ENCODE measurements at regions of chr4 and their contacts with region 1.

Region 1: GRCh38 chr4:94338681-94339351 is 3.8 kb downstream of the HPGDS start:
- DNase-seq: no peak
- H3K4me3 Mint-ChIP-seq: peak overlapping the region; percentile 52
- H3K27ac Mint-ChIP-seq: peak overlapping the region; percentile 91
- H3K4me1 Mint-ChIP-seq: peaks cover 30% of the 10 kb centered on the region
- H3K27me3 Mint-ChIP-seq: peaks cover 4% of the 10 kb centered on the region

Region 2: GRCh38 chr4:94363136-94363655 is 24.4 kb after region 1 on chr4:
- intact Hi-C with region 1: no loop called
- DNase-seq: no peak
- H3K4me3 Mint-ChIP-seq: no peak overlapping the region
- H3K27ac Mint-ChIP-seq: no peak overlapping the region
- H3K4me1 Mint-ChIP-seq: no peaks in the 10 kb centered on the region
- H3K27me3 Mint-ChIP-seq: peaks cover 35% of the 10 kb centered on the region

Region 3: DNA sequence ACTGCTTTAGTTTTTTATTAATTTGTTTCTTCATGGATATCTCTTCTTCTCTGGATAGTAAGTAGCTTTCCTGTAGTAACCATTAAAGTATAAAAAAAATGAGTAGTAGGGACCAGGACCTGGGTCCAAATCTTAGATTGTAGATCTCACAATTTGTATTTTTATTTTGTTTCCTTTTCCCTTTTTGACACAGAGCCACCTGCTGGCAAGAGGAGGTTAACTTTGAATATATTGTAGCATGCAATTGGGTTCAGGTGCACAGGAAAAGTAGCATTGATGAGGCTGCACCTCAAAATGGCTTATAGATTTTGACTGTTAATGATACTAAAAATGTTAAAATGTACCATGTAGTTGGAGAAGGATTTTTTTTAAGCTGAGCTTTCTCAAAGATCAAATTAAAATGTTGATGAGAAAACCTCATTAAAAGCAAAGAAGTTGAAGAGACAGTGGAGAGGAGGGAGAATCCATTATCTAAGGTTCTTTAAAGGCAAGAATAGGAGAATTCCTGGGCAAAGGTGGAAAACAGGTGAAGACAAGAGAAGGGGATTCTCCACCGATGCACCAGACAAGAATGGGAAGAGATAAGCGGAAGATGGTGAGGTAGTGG is 52.1 kb after region 1 on chr4:
- intact Hi-C with region 1: loop called (anchors 2 kb)
- DNase-seq: no peak
- H3K4me3 Mint-ChIP-seq: no peak overlapping the region
- H3K27ac Mint-ChIP-seq: no peak overlapping the region
- H3K4me1 Mint-ChIP-seq: peaks cover 4% of the 10 kb centered on the region
- H3K27me3 Mint-ChIP-seq: peaks cover 27% of the 10 kb centered on the region